Panc1 (cell line): ENCODE measurements at regions of chr12 and their contacts with region 1.

Region 1: DNA sequence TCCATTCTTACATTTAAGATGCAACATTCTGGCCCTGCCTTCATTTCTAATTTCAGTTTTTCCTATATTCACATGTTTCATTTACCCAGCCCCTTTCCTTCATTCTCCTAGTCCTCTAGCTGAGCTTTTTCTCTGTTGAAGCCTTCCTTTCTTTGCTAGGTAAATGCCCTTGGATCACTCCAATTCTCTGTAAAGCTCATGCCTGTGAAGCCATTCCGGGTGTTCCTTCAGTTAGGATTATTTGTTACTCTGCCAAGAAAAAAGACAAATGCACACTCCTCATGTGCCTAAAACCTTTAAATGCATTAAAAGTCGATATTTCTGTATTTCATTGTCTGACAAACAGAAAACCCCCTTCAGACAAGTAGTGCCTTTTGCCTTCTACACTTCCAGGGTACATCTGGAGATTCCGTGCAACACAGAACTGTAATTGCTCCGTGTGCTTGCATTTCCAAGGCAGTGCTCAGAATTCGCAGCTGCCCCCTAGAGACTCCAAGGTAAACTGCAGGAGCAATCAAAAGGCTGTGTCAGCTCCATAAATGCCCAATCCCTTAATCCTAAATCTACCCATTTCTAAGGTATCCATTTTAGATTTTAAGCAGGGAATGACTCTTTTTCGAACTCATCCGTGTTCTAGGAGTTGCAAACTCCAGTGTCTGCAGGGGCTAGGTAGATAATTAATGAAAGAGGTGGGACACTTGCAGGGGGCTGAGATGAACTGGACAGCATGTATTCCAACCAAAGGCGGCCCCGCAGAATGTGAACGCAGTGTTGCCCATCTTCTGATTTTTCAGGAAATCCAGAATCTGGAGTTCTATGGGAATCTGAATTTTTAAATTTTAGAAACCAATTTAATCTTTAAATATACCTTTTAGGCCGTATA is 320.2 kb downstream of the GRIN2B start:
- DNase-seq: peak; percentile 15
- ATAC-seq: 0 out of 2 replicates have a peak, but pooled peaks have one; percentile 68
- H3K4me3 ChIP-seq: no peak overlapping the region
- H3K27ac ChIP-seq: no peak overlapping the region
- H3K4me1 ChIP-seq: no peaks in the 10 kb centered on the region
- H3K27me3 ChIP-seq: no peaks in the 10 kb centered on the region
- CTCF ChIP-seq: peak; percentile 79

Region 2: GRCh38 chr12:13278249-13278787 is 382.9 kb before region 1 on chr12:
- CTCF ChIA-PET with region 1: no interaction called
- POLR2A ChIA-PET with region 1: no interaction called
- in situ Hi-C with region 1: no loop called
- intact Hi-C with region 1: loop called (anchors 2 kb)
- DNase-seq: no peak
- ATAC-seq: peak; percentile 97
- H3K4me3 ChIP-seq: peak overlapping the region in 1 of 2 experiments; percentile 23; a peak in 1 of 4 replicates
- H3K27ac ChIP-seq: no peak overlapping the region
- H3K4me1 ChIP-seq: peaks cover 3% of the 10 kb centered on the region; the same call in 1 of the 2 replicates
- H3K27me3 ChIP-seq: peaks cover 3% of the 10 kb centered on the region; the same call in 1 of the 2 replicates
- CTCF ChIP-seq: peak; percentile 96

Region 3: DNA sequence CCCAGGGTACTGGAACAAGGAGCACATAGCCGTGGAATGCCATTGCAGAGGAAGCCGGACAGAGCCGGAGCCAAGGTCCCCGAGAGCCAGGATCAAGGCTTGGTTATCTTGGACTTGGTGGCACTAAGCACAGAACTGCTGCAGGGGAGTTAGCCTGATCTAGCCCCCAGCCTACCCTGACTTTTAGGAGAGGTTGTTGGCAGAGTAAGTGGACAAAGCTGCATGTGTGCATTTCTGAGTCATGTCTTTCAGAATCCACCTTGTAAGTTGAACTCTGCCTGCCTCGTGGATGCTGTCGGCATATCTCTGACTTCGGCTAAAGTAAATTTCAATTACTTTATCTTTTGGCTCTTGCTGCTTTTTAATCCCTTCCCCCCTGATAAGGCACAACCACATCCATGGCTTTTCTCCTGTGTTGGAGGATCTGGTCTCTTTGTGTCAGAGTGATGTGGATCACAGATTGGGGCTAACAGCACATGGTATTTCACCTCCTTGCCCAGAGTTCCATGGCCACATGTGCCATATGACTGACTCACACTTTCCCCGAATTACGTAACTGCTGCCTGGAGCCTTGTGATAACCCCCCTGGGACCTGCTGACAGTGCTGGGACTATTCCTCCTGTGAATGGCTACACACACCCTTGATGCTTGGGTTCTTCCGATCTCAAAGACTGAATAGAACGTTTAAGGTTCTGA is 224.4 kb before region 1 on chr12:
- CTCF ChIA-PET with region 1: no interaction called
- POLR2A ChIA-PET with region 1: no interaction called
- in situ Hi-C with region 1: no loop called
- intact Hi-C with region 1: no loop called
- DNase-seq: no peak
- ATAC-seq: no peak
- H3K4me3 ChIP-seq: no peak overlapping the region
- H3K27ac ChIP-seq: no peak overlapping the region
- H3K4me1 ChIP-seq: no peaks in the 10 kb centered on the region
- H3K27me3 ChIP-seq: no peaks in the 10 kb centered on the region
- CTCF ChIP-seq: no peak